ENCODE measurements at regions of chr12 and their contacts with region 1.

Region 1: GRCh38 chr12:121209624-121210572 is at the start of gene P2RX4:
- DNase-seq: peak; percentile 97
- H3K4me3 Mint-ChIP-seq: peak within 1 kb of the TSS; percentile 92
- H3K27ac Mint-ChIP-seq: peak within 1 kb of the TSS; percentile 94
- H3K4me1 Mint-ChIP-seq: peaks cover 31% of the 10 kb centered on the region
- H3K27me3 Mint-ChIP-seq: no peaks in the 10 kb centered on the region
- total RNA-seq, gene P2RX4: 20.9 and 25.9 TPM in 2 replicates

Region 2: DNA sequence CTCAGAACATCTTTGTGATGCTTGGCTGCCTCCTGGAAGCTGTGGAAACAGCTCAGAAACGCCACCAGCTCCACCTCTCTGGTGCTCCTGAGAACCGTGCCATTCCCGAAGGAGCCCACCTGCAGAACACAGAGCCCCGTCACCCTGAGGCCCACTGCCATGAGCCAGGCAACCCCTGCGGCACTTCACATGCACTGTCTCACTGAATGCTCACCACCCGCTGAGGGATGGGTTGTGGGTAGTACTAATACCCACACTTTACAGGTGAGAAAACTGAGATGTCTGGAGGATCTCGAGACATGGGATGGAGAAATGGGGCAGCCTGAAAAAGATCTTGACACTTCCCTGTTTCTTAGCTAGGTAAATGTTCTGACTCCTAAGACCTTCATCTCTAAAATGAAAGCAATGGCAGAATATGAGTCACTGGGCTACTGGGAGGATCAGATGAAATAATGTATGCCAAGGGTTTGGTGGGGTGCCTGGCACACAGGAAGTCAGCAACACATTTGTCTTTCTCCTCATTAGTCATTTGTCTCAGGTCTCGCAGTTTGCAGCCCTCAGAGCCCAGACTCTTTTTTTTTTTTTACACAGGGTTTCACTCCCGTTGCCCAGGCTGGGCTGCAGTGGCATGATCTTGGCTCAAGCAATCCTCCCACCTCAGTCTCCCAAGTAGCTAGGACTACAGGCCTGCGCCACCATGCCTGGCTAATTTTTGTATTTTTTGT is 176.1 kb before region 1 on chr12:
- intact Hi-C with region 1: loop called (anchors 2 kb)
- DNase-seq: peak; percentile 79
- H3K4me3 Mint-ChIP-seq: peak overlapping the region; percentile 60
- H3K27ac Mint-ChIP-seq: peak overlapping the region; percentile 80
- H3K4me1 Mint-ChIP-seq: peaks cover 52% of the 10 kb centered on the region
- H3K27me3 Mint-ChIP-seq: no peaks in the 10 kb centered on the region

Region 3: GRCh38 chr12:121128970-121129810 is 80.7 kb before region 1 on chr12:
- intact Hi-C with region 1: loop called (anchors 1 kb)
- DNase-seq: peak; percentile 94
- H3K4me3 Mint-ChIP-seq: peak overlapping the region; percentile 79
- H3K27ac Mint-ChIP-seq: peak overlapping the region; percentile 96
- H3K4me1 Mint-ChIP-seq: peaks cover 70% of the 10 kb centered on the region
- H3K27me3 Mint-ChIP-seq: no peaks in the 10 kb centered on the region

Region 4: GRCh38 chr12:121144416-121144914 is 65.4 kb before region 1 on chr12:
- intact Hi-C with region 1: loop called (anchors 5 kb)
- DNase-seq: no peak
- H3K4me3 Mint-ChIP-seq: peak overlapping the region; percentile 52
- H3K27ac Mint-ChIP-seq: peak overlapping the region; percentile 86
- H3K4me1 Mint-ChIP-seq: peaks cover 28% of the 10 kb centered on the region
- H3K27me3 Mint-ChIP-seq: no peaks in the 10 kb centered on the region

Region 5: GRCh38 chr12:121159467-121160307 is 50.2 kb before region 1 on chr12:
- intact Hi-C with region 1: no loop called
- DNase-seq: no peak
- H3K4me3 Mint-ChIP-seq: no peak overlapping the region
- H3K27ac Mint-ChIP-seq: peak overlapping the region; percentile 26
- H3K4me1 Mint-ChIP-seq: peaks cover 2% of the 10 kb centered on the region
- H3K27me3 Mint-ChIP-seq: no peaks in the 10 kb centered on the region

Region 6: GRCh38 chr12:121170611-121171260 is 39.2 kb before region 1 on chr12:
- intact Hi-C with region 1: no loop called
- DNase-seq: no peak
- H3K4me3 Mint-ChIP-seq: no peak overlapping the region
- H3K27ac Mint-ChIP-seq: no peak overlapping the region
- H3K4me1 Mint-ChIP-seq: no peaks in the 10 kb centered on the region
- H3K27me3 Mint-ChIP-seq: no peaks in the 10 kb centered on the region

Region 7: GRCh38 chr12:121223292-121224285 is 13.7 kb after region 1 on chr12:
- intact Hi-C with region 1: no loop called
- DNase-seq: peak; percentile 84
- H3K4me3 Mint-ChIP-seq: peak overlapping the region; percentile 52
- H3K27ac Mint-ChIP-seq: peak overlapping the region; percentile 88
- H3K4me1 Mint-ChIP-seq: peaks cover 43% of the 10 kb centered on the region
- H3K27me3 Mint-ChIP-seq: no peaks in the 10 kb centered on the region

Region 8: GRCh38 chr12:121296618-121297434 is 86.9 kb after region 1 on chr12 and contains the start of gene CAMKK2:
- intact Hi-C with region 1: loop called (anchors 5 kb)
- DNase-seq: peak; percentile 98
- H3K4me3 Mint-ChIP-seq: peak within 1 kb of the TSS; percentile 93
- H3K27ac Mint-ChIP-seq: peak within 1 kb of the TSS; percentile 87
- H3K4me1 Mint-ChIP-seq: peaks cover 22% of the 10 kb centered on the region
- H3K27me3 Mint-ChIP-seq: no peaks in the 10 kb centered on the region
- total RNA-seq, gene CAMKK2: 37.4 and 38.2 TPM in 2 replicates